Activated CD8-positive, alpha-beta T cell treated with anti-CD3 and anti-CD28 coated beads, Interleukin-2, amount 10 ng/mL, durations not matched to agents 7 days and 5 days (primary cell): ENCODE measurements at regions of chr17 and their contacts with region 1.

Region 1: GRCh38 chr17:46193626-46194392 is 580 bp upstream of the KANSL1 start:
- DNase-seq: peak; percentile 95
- ATAC-seq: peak; percentile 85
- H3K4me3 Mint-ChIP-seq: peak overlapping the region; percentile 84
- H3K27ac Mint-ChIP-seq: peak overlapping the region; percentile 99
- H3K4me1 Mint-ChIP-seq: peaks cover 62% of the 10 kb centered on the region
- H3K27me3 Mint-ChIP-seq: no peaks in the 10 kb centered on the region

Region 2: GRCh38 chr17:46144246-46144645 is 49.6 kb before region 1 on chr17:
- CTCF ChIA-PET with region 1: interaction called, 16 read pairs
- POLR2A ChIA-PET with region 1: no interaction called
- DNase-seq: no peak
- ATAC-seq: no peak
- H3K4me3 Mint-ChIP-seq: no peak overlapping the region
- H3K27ac Mint-ChIP-seq: no peak overlapping the region
- H3K4me1 Mint-ChIP-seq: peaks cover 68% of the 10 kb centered on the region
- H3K27me3 Mint-ChIP-seq: no peaks in the 10 kb centered on the region

Region 3: DNA sequence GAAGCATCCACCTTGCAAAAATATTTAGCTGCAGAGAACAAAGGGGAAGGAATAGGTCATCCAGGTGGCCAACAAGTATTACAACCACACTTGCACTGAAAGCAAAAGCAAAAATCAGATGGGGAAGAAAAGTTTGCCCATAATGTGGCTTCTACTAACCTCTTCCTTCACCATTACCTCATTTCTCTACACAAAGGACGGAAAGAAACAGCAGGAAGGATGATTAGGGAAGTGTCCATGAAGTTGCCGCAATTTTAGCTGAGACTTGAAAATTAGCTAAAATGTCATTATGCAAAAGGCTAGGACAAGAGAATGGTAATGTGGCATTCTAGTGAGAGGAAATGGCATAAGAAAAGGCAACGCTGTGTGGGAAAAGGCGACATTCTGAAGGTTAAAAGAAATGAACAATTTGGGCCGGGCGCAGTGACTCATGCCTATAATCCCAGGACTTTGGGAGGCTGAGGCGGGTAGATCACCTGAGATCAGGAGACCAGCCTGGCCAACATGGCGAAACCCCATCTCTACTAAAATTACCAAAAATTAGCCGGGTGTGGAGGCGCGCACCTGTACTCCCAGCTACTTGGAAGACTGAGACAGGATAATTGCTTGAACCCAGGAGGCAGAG is 14.3 kb before region 1 on chr17:
- CTCF ChIA-PET with region 1: interaction called, 15 read pairs
- POLR2A ChIA-PET with region 1: interaction called, 4 read pairs
- DNase-seq: no peak
- ATAC-seq: peak; percentile 76
- H3K4me3 Mint-ChIP-seq: peak overlapping the region; percentile 57
- H3K27ac Mint-ChIP-seq: peak overlapping the region; percentile 74
- H3K4me1 Mint-ChIP-seq: peaks cover 65% of the 10 kb centered on the region
- H3K27me3 Mint-ChIP-seq: no peaks in the 10 kb centered on the region